Posterior vena cava (tissue), 2 donors: ENCODE measurements at regions of chr19 and their contacts with region 1.

Region 1: DNA sequence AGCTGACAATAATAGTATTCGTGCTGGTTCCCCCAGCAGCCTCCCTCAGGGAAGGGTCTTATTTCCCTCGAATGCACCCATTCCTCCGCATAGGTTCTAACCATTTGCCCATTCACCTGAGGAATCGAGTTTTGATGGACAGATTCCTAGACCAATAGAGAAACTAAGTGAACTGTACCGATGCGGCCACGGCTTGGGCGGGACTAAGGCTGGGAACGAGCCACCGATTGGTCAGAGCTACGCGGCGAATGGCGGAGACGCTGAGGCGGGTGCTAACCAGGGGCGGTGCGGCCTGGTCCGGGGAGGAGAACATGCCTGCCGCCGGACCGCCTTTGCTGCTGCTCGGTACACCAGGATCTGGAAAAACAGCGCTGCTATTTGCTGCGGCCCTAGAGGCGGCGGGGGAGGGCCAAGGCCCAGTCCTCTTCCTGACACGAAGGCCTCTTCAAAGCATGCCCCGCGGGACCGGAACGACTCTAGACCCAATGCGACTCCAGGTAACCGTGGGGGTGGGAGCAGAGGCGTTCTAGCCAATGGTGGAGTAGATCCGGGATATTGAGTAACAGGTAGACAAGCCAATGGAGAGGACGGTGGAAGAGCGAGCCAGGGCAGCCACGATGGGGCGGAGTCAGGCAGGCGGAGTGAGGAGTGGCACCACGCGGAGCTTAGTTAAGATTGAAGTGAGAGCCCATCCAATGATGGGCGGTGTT is at the start of gene SWSAP1:
- DNase-seq: peak; percentile 99
- total RNA-seq, gene SWSAP1: 1.2 to 1.8 TPM

Region 2: DNA sequence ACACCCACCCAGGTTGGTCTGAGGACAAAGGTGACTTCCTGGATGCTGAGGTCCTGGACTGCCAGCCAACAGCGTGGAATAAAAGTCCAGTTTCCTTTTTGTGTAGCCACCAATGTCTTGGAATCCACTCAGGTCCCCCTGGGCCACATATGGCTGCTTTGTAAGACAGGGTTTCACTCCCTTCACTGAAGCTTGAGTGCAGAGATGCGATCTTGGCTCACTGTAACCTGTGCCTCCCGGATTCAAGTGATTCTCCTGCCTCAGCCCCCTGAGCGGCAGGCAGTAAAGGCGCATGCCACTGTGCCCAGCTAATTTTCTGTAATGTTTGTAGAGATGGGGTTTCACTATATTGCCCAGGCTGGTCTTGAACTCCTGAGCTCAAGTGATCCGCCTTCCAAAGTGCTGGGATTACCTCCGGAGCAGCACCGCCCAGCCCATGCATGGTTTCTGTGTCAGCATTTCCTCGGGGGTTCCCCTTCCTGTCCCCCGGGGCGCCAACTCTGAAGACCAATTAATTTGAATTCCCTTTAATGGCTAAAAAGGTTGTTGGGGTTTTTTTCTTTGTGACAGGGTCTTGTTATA is 194.8 kb before region 1 on chr19:
- intact Hi-C with region 1: no loop called
- DNase-seq: no peak

Region 3: GRCh38 chr19:11356676-11357550 is 17.7 kb before region 1 on chr19:
- intact Hi-C with region 1: loop called in 1 of 2 experiments (anchors 1 kb)
- DNase-seq: no peak